ENCODE measurements at regions of chr10 and their contacts with region 1.

Region 1: GRCh38 chr10:73096449-73097304 is at the start of gene P4HA1:
- DNase-seq: peak; percentile 96
- ATAC-seq: peak; percentile 95
- H3K4me3 ChIP-seq: peak within 1 kb of the TSS; percentile 71
- H3K27ac ChIP-seq: peak within 1 kb of the TSS; percentile 91
- H3K4me1 ChIP-seq: peaks cover 3% of the 10 kb centered on the region; the same call in 1 of the 2 replicates
- H3K27me3 ChIP-seq: no peaks in the 10 kb centered on the region
- CTCF ChIP-seq: peak; percentile 71
- POLR2A ChIP-seq: peak; percentile 100
- RAD21 ChIP-seq: peak; percentile 55
- total RNA-seq, gene P4HA1: 241 and 376 TPM in 2 replicates

Region 2: DNA sequence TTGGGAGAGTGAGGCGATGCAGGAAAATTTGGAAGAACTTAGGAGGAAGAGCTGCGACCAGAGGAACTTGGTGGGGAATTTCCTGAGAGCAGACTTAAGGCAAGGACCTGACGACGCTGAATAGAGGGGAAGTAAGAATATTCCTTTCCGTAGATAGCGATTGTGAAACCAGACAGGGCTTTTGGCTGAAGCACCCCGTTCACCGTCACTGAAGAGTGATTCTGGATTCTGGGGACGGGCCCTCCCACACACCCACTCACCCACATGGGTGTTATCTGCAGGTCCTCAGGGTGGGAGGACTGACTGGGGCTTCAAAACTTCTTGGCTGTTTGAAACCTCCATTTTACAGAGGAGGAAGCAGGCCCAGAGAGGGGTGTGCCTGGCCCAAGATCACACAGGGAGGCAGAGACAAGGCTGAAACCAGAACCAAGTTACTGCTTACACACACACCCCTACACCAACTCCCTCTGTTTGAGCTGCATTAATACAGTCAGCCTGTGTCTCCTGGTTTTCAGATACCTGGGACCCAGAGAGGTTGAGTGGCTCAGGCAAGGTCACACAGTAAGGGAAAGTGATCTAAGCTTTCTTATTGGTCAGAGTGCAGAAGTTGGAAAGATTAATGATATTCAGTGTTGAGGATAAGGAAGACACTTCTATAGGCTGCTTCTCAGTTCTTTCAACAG is 1737.2 kb before region 1 on chr10:
- CTCF ChIA-PET with region 1: no interaction called
- POLR2A ChIA-PET with region 1: interaction called, 17 read pairs
- dilution Hi-C with region 1: no loop called
- in situ Hi-C with region 1: no loop called
- intact Hi-C with region 1: no loop called
- DNase-seq: no peak
- ATAC-seq: no peak
- H3K4me3 ChIP-seq: no peak overlapping the region
- H3K27ac ChIP-seq: no peak overlapping the region
- H3K4me1 ChIP-seq: peaks cover under 1% of the 10 kb centered on the region
- H3K27me3 ChIP-seq: no peaks in the 10 kb centered on the region
- CTCF ChIP-seq: no peak
- POLR2A ChIP-seq: no peak
- RAD21 ChIP-seq: no peak

Region 3: DNA sequence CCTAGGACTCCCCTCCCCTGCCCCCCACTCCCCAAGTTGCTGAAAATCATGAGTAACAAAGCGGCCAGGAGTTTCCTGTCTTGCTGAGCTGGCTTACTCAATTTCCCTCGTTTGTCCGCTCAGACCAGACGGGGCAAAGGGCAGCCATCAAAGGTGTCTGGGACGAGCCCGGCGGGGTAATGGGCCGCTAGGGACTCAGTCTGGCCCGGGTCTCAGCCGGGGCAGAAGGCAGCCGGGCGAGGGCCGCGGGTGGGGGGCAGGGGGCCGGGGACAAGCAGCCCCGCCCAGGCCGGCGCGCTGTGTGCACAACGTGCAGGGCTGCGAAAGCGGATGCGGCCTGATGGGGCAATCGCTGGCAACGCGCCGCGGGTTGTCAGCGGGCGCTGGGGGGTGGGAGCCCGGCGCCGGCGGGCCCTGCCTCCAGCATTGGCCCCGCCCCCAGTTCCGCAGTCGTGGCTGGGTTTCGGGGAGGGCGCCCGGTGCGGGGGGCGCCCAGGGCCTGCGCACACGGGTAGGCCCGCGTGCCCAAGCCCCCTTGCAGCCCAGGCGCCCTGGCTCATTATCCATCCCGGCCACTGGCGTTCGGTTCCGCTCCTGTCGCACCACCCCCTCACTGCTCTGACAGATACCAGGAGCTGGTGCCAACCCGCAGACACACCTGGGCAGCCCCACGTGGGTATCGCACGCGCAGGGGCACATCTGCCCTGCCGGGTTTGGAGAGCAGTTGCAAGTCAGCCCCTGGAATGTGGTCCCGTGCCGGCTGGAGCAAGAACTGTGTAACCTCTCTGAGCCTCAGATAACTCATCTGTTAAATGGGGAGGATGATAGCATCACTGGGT is 777.0 kb before region 1 on chr10:
- CTCF ChIA-PET with region 1: no interaction called
- POLR2A ChIA-PET with region 1: interaction called, 10 read pairs
- dilution Hi-C with region 1: no loop called
- in situ Hi-C with region 1: no loop called
- intact Hi-C with region 1: no loop called
- DNase-seq: peak; percentile 89
- ATAC-seq: peak; percentile 78
- H3K4me3 ChIP-seq: peak overlapping the region; percentile 41
- H3K27ac ChIP-seq: peak overlapping the region; percentile 99
- H3K4me1 ChIP-seq: peaks cover 42% of the 10 kb centered on the region
- H3K27me3 ChIP-seq: no peaks in the 10 kb centered on the region
- CTCF ChIP-seq: no peak
- POLR2A ChIP-seq: peak; percentile 47; the same call in 1 of the 2 replicates
- RAD21 ChIP-seq: no peak

Region 4: GRCh38 chr10:73076360-73077183 is 20.1 kb before region 1 on chr10:
- CTCF ChIA-PET with region 1: interaction called, 4 read pairs
- POLR2A ChIA-PET with region 1: interaction called, 10 read pairs
- dilution Hi-C with region 1: no loop called
- in situ Hi-C with region 1: no loop called
- intact Hi-C with region 1: no loop called
- DNase-seq: peak; percentile 85
- ATAC-seq: peak; percentile 87
- H3K4me3 ChIP-seq: no peak overlapping the region
- H3K27ac ChIP-seq: peak overlapping the region; percentile 44; the same call in 1 of the 2 replicates
- H3K4me1 ChIP-seq: peaks cover 5% of the 10 kb centered on the region; the same call in 1 of the 2 replicates
- H3K27me3 ChIP-seq: no peaks in the 10 kb centered on the region
- CTCF ChIP-seq: no peak
- POLR2A ChIP-seq: no peak
- RAD21 ChIP-seq: no peak

Region 5: DNA sequence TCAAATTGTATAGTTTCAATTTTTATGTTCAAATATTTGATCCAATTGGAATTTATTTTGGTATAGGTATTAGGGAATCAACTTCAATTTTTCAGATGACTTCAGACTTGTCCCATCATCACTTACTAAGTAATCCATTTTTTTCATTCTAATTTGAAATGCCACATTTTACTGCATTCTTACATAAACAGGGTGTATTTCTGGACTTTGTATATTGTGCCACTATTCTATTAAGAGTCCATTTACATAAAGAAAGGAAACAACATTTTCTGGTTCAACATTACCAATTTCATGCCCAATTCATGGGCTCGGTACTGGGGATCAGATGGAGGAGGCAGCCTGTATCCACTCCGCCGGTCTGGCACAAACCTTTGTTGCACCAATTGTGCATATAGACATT is 55.3 kb after region 1 on chr10:
- CTCF ChIA-PET with region 1: no interaction called
- POLR2A ChIA-PET with region 1: no interaction called
- dilution Hi-C with region 1: no loop called
- in situ Hi-C with region 1: no loop called
- intact Hi-C with region 1: no loop called
- DNase-seq: no peak
- ATAC-seq: no peak
- H3K4me3 ChIP-seq: no peak overlapping the region
- H3K27ac ChIP-seq: no peak overlapping the region
- H3K4me1 ChIP-seq: no peaks in the 10 kb centered on the region
- H3K27me3 ChIP-seq: no peaks in the 10 kb centered on the region
- CTCF ChIP-seq: no peak
- POLR2A ChIP-seq: no peak
- RAD21 ChIP-seq: no peak

Region 6: DNA sequence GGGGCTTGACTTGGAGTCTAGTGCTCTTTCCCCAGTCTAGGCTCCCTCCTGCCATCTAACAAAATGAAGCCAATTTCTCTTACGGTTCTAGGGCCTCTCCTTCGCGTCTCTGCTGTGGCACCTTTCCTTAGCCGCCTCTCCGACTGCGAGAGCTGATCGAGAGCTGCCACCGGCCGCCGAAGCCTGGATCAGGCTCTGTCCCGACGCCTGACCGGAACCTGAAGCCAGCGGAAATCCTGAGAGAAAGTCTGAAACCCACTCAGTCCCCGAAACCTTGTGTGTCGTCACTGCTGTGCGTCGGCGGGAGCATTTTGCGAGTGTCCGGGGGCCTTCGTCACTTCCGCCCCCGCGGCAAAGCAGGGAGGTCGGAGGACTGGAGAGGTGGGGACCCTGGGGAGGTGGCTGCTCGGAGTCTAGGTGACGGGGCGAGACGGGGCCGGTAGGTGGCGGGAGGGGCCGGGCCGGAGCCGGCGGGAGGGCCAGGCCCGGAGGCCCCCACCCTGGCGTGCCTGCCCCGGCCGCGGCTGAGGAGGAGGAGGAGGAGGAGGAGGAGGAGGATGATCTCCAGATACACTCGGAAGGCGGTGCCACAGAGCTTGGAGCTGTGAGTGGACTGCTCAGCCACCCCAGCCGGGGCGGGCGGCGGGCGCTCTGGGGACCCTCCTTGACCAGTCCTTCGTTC is 71.2 kb after region 1 on chr10 and contains the starts of genes ECD and FAM149B1:
- CTCF ChIA-PET with region 1: no interaction called
- POLR2A ChIA-PET with region 1: interaction called, 18 read pairs
- dilution Hi-C with region 1: no loop called
- in situ Hi-C with region 1: no loop called
- intact Hi-C with region 1: no loop called
- DNase-seq: peak; percentile 94
- ATAC-seq: peak; percentile 96
- H3K4me3 ChIP-seq: peak within 1 kb of the TSS; percentile 79
- H3K27ac ChIP-seq: peak within 1 kb of the TSS; percentile 75
- H3K4me1 ChIP-seq: no peaks in the 10 kb centered on the region; the same call in 1 of the 2 replicates
- H3K27me3 ChIP-seq: no peaks in the 10 kb centered on the region
- CTCF ChIP-seq: no peak
- POLR2A ChIP-seq: peak; percentile 98
- RAD21 ChIP-seq: no peak; the same call in 1 of the 2 replicates
- total RNA-seq, gene ECD: 32.8 and 36.9 TPM in 2 replicates
- total RNA-seq, gene FAM149B1: 22.8 and 28.3 TPM in 2 replicates